Activated naive CD4-positive, alpha-beta T cell treated with anti-CD3 and anti-CD28 coated beads, Interleukin-2, amount 10 ng/mL, durations not matched to agents 7 days and 5 days (primary cell): ENCODE measurements at regions of chr3 and their contacts with region 1.

Region 1: DNA sequence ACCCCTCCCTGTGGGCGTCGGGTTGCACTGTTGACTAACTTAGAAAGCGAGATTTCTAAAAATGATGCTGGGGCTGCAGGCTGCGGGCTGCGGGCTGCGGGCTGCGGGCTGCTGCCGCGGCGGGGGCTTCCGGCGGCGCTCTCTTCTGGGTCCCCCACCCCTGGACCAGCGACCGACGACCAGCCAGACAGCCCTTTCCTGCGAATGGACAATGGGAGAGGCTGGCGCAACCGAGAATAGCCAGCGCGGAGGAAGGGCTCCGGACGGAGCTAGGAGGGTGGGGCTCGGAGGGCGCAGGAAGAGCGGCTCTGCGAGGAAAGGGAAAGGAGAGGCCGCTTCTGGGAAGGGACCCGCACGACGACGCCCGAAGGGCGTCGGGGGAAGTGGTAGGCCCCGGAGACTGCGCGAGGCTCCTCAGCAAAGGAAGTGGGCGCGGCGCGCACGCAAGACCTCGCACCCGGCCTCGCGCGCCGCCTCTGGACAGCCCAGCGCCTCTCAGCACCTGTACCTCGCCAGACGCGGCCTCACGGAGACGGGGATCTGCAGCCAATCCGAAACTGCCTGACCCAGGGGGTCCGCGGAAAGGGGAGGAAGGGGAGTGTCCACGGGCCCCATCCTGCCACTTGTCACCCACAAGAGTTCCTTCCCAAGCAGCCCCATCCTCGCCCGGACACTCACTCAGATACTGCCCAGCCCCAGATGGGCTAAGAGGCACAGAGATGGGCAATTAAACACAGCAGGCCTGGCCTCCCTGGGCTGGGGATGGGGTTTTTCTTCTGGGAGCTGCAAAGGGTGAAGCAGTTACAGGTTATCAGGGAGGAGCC is 70.7 kb downstream of the SLC12A8 start:
- DNase-seq: peak; percentile 83
- H3K4me3 Mint-ChIP-seq: peak overlapping the region; percentile 68
- H3K27ac Mint-ChIP-seq: peak overlapping the region; percentile 89
- H3K4me1 Mint-ChIP-seq: peaks cover 67% of the 10 kb centered on the region
- H3K27me3 Mint-ChIP-seq: peaks cover 82% of the 10 kb centered on the region

Region 2: DNA sequence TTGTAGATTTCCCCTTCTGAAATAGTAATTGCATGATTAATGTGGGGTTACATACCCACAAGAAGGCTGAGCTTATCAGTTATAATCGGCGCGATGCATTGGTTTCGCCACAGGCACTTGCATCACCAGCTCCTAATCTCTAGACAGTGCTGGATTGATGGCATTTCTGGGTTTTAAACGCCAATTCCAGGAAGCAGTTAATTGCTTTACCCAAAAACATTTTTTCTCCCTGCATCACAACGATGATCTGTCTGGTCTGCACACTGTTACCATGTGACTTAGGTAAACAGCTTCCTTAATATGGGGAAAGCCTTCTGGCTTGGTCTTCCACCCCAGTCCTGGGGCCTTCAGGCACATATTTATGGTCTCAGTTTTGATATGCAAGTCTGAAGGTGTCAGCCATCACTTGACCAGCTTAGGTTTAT is 16.0 kb before region 1 on chr3:
- CTCF ChIA-PET with region 1: interaction called, 11 read pairs
- DNase-seq: peak; percentile 46
- H3K4me3 Mint-ChIP-seq: no peak overlapping the region
- H3K27ac Mint-ChIP-seq: peak overlapping the region; percentile 12
- H3K4me1 Mint-ChIP-seq: peaks cover 52% of the 10 kb centered on the region
- H3K27me3 Mint-ChIP-seq: peaks cover 46% of the 10 kb centered on the region

Region 3: GRCh38 chr3:125179143-125179883 is 37.5 kb after region 1 on chr3:
- CTCF ChIA-PET with region 1: no interaction called
- DNase-seq: no peak
- H3K4me3 Mint-ChIP-seq: no peak overlapping the region
- H3K27ac Mint-ChIP-seq: no peak overlapping the region
- H3K4me1 Mint-ChIP-seq: no peaks in the 10 kb centered on the region
- H3K27me3 Mint-ChIP-seq: no peaks in the 10 kb centered on the region